Activated naive CD4-positive, alpha-beta T cell treated with anti-CD3 and anti-CD28 coated beads, Interleukin-2, amount 10 ng/mL, durations not matched to agents 7 days and 5 days (primary cell): ENCODE measurements at regions of chr9 and their contacts with region 1.

Region 1: DNA sequence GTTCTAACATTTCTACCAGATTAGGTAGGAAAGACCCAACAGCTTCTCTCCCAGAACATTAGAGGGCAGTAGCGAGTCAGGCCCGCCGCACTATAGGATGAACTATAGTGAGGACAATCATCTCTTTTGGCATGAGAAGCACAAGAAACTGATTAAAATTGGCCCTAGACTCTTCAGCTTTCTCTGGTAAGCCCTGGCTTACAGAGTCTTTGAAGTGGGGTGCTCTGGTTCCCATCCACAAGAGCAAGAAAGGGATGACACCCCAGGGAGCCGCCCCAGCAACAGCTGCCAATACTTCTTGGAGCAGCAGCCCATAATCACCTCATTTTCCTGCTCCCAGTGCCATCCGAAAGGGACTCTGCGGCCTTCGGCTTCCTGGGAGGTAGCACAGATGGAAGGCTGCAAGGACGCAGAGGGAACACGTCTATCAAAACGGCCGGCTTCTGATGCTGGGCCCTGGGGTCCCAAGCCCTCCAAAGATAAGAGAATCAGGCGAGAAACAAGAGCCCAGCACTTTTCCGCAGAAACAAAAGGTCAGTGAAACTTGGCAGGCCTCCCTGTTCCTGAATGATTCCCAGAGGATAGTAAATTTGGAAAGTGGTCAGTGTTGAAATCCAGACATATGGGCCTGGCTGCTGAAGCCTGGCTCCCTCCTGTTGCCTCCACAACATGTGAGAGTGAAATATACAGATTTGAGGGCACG is 69.3 kb downstream of the HSD17B3 start:
- DNase-seq: peak; percentile 51
- H3K4me3 Mint-ChIP-seq: no peak overlapping the region
- H3K27ac Mint-ChIP-seq: no peak overlapping the region
- H3K4me1 Mint-ChIP-seq: no peaks in the 10 kb centered on the region
- H3K27me3 Mint-ChIP-seq: peaks cover 50% of the 10 kb centered on the region

Region 2: DNA sequence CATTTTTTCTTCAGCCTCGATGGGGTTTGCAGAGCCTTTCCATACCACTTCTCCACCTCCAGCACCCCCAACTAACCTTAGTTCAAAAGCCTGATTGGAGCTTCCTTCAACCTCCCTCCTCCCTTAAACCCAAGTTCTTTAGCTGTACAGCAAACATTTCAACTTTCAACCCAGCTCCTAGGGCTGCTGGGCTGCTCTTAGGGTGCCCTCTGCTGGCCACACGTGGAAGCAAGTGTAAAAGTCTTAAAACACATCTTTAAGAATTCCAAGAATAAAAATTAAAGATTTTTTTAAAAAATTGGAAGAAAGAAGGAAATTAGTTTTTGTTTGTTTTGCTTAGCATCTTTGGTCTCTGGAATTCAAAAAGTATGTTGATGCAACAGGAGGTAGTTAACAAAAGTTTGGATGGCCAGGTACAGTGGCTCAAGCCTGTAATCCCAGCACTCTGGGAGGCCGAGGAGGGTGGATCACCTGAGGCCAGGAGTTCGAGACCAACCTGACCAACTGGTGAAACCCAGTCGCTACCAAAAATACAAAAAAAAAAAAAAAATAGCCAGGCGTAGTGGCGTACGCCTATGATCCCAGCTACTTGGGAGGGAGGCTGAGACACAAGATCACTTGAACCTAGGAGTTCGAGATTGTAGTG is 84.8 kb after region 1 on chr9:
- CTCF ChIA-PET with region 1: interaction called, 21 read pairs
- DNase-seq: peak; percentile 59
- H3K4me3 Mint-ChIP-seq: no peak overlapping the region
- H3K27ac Mint-ChIP-seq: no peak overlapping the region
- H3K4me1 Mint-ChIP-seq: no peaks in the 10 kb centered on the region
- H3K27me3 Mint-ChIP-seq: peaks cover 4% of the 10 kb centered on the region

Region 3: GRCh38 chr9:96513622-96514021 is 280.9 kb after region 1 on chr9:
- CTCF ChIA-PET with region 1: no interaction called
- DNase-seq: no peak
- H3K4me3 Mint-ChIP-seq: no peak overlapping the region
- H3K27ac Mint-ChIP-seq: no peak overlapping the region
- H3K4me1 Mint-ChIP-seq: peaks cover 4% of the 10 kb centered on the region
- H3K27me3 Mint-ChIP-seq: no peaks in the 10 kb centered on the region